Ascending aorta (tissue), 2 donors: ENCODE measurements at regions of chr2 and their contacts with region 1.

Region 1: DNA sequence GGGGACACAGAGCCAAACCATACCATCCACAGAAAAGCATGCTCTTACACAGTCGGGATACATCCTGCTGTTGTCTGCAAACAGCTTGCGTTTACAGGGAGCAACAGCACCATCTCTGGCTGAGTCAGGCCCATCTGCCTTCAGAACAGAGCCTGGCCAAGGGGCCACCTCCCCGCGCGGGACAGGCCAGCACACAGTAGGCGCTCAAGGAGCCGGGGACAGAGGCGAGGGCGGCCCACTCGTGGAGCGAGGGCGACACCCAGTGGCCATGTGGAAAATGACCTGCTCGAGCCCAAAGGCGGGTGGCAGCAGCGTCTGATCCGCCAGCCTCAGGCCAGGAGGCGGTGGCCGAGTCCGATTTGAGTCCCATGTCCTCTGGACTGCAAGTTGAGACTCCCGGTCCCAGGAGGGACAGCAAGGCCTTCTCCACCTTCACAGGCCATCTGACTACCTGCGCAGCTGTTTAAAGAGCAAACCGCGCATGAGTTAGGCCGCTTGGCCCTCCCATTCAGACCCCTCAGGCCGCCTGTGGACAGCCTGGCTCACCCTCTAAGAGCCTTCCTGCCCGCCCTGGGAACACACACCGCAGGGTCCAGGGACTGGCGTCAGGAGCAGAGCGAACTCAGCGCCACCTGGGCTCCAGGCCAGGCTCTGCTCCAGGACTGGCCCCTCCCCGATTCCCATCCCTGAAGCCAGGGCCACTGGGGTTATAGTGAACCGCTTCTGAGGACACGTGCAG is 38.3 kb downstream of the TTC32 start:
- DNase-seq: peak in 1 of 2 donors; percentile 89
- H3K4me3 ChIP-seq: peak overlapping the region in 1 of 2 donors; percentile 50
- H3K27ac ChIP-seq: peak overlapping the region; percentile 89 to 91
- H3K4me1 ChIP-seq: peaks cover 14 to 42% of the 10 kb centered on the region in 2 donors
- H3K27me3 ChIP-seq: no peaks in the 10 kb centered on the region
- CTCF ChIP-seq: peak; percentile 97 to 98 (median 97)

Region 2: GRCh38 chr2:18387441-18388206 is 1475.8 kb before region 1 on chr2:
- intact Hi-C with region 1: loop called (anchors 10 kb)
- DNase-seq: peak in 1 of 2 donors; percentile 92
- H3K4me3 ChIP-seq: no peak overlapping the region
- H3K27ac ChIP-seq: peak overlapping the region; percentile 44 to 46
- H3K4me1 ChIP-seq: peaks cover 0 to 3% of the 10 kb centered on the region in 2 donors
- H3K27me3 ChIP-seq: no peaks in the 10 kb centered on the region
- CTCF ChIP-seq: peak; percentile 66 to 90 (median 89)

Region 3: GRCh38 chr2:18560031-18560796 is 1303.3 kb before region 1 on chr2 and contains the start of gene RDH14:
- intact Hi-C with region 1: loop called (anchors 5 kb)
- DNase-seq: peak; percentile 87 to 98
- H3K4me3 ChIP-seq: peak within 1 kb of the TSS; percentile 78 to 90
- H3K27ac ChIP-seq: peak within 1 kb of the TSS; percentile 93 to 95
- H3K4me1 ChIP-seq: peaks cover 5 to 25% of the 10 kb centered on the region in 2 donors
- H3K27me3 ChIP-seq: no peaks in the 10 kb centered on the region
- CTCF ChIP-seq: no peak
- total RNA-seq, gene RDH14: 51.2 TPM

Region 4: GRCh38 chr2:18889565-18890332 is 973.7 kb before region 1 on chr2:
- intact Hi-C with region 1: loop called (anchors 10 kb)
- DNase-seq: no peak
- H3K4me3 ChIP-seq: no peak overlapping the region
- H3K27ac ChIP-seq: peak overlapping the region; percentile 27 to 65
- H3K4me1 ChIP-seq: peaks cover 0 to 9% of the 10 kb centered on the region in 2 donors
- H3K27me3 ChIP-seq: no peaks in the 10 kb centered on the region
- CTCF ChIP-seq: no peak

Region 5: GRCh38 chr2:19685731-19686130 is 177.7 kb before region 1 on chr2:
- intact Hi-C with region 1: loop called (anchors 5 kb)
- DNase-seq: no peak
- H3K4me3 ChIP-seq: no peak overlapping the region
- H3K27ac ChIP-seq: peak overlapping the region in 1 of 2 donors; percentile 22
- H3K4me1 ChIP-seq: peaks cover 4 to 17% of the 10 kb centered on the region in 2 donors
- H3K27me3 ChIP-seq: no peaks in the 10 kb centered on the region
- CTCF ChIP-seq: no peak

Region 6: DNA sequence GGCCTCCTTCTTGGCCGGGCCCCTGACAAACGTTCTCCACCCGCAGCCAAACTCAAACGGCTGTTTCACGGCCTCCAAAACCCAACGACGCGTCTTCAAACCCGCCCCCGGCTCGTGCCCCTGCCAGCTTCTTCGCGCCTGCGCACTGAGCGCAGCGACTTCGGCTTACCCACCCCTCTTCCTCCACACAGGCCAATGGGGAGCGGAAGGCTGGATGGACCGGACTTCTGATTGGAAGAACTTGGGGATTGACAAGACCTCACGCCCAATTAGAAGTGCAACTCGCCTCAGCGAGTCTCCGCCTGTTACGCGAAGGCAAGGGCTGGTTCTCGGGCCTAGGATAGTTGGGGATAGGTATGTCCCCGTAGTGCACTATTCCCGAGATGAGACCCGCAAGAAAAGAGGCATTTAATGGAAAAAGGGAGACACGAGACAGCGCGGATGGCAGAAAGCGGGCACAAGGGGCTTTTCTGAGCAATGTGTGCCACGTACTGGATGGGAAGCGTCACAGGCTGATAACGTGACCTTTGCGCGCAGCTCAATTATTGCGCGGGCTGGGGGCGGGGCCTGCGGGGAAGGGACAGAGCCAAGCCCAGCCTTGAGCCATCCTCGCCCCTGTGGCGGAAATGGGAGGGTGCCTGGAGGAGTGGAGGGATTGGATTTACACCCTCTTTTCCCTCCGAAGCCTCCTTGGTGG is 188.2 kb after region 1 on chr2 and contains the start of gene LAPTM4A:
- intact Hi-C with region 1: no loop called
- DNase-seq: peak; percentile 97 to 100
- H3K4me3 ChIP-seq: peak within 1 kb of the TSS; percentile 73 to 81
- H3K27ac ChIP-seq: peak within 1 kb of the TSS; percentile 96
- H3K4me1 ChIP-seq: peaks cover 0 to 21% of the 10 kb centered on the region in 2 donors
- H3K27me3 ChIP-seq: no peaks in the 10 kb centered on the region
- CTCF ChIP-seq: no peak
- total RNA-seq, gene LAPTM4A: 95.6 TPM